ENCODE measurements at regions of chr1 and their contacts with region 1.

Region 1: DNA sequence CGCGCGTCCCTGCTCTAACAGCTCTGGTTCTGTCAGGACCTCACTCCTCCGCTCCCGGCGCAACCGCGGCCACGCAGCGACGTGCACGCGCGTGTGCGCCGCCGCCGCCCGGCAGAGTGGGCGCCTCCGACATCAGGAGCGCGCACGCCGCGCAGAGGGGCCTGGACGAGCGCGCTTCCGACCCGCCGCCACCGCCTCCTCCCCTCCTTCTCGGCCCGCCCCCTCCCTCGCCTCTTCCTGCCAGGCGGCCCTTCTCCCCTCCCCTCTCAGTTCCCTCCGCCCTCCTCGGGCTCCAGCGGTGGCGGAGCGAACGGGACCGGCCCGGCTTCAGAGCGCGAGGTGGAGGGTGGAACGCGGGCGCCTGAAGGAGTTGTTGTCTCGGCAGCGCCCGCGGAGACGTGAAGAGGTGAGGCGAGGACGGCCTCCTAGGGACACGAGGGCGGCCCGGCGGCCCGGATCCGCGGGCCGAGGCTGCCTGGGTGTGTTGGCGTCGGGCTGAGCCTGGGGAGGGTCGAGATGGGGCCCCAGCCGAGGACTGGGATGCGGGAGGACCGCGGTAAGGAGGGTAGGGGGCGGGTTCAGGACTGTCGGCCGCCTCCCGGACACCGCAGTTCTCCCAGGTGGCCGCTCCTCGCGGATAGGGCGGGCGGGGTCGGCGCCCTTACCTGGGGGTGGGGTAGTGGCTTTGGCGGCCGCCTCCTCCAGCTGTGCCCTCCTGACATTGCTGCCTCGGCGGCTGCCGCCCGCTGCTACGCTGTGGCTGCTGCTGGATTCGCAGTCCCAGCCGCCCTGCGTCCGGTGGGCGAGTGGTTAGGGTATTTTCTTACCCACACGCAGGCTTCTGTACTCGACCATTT is at the start of gene RABGAP1L:
- DNase-seq: peak; percentile 96
- ATAC-seq: peak; percentile 86
- H3K4me3 ChIP-seq: peak within 1 kb of the TSS; percentile 76 to 98 (median 93)
- H3K4me3 Mint-ChIP-seq: peak within 1 kb of the TSS; percentile 95
- H3K27ac ChIP-seq: peak within 1 kb of the TSS; percentile 85 to 89
- H3K27ac Mint-ChIP-seq: peak within 1 kb of the TSS; percentile 97
- H3K4me1 ChIP-seq: peaks cover 29 to 48% of the 10 kb centered on the region in 2 donors
- H3K4me1 Mint-ChIP-seq: peaks cover 60% of the 10 kb centered on the region
- H3K27me3 ChIP-seq: no peaks in the 10 kb centered on the region
- H3K27me3 Mint-ChIP-seq: no peaks in the 10 kb centered on the region
- CTCF ChIP-seq: no peak
- total RNA-seq, gene RABGAP1L: 159 and 163 TPM in 2 replicates

Region 2: DNA sequence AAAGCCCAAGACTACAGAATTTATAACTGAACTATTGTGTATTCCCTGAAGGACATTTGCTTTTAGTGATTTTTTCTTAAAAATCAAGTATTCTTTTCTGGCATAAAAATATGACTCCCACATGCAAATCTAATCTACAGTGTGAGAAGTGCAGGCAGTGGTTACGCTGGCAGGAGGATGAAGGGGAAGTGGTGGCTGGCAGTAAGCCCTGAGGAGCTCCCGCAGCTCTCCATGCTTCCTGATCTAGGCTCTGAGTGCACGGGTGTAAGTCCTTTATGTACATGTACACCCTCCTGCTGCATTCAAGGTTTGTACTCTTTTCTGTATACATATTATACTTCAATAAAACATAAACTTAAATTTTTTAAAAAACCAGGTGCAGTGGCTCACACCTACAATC is 749.9 kb before region 1 on chr1:
- CTCF ChIA-PET with region 1: no interaction called
- POLR2A ChIA-PET with region 1: no interaction called
- intact Hi-C with region 1: loop called (anchors 5 kb)
- DNase-seq: peak; percentile 73
- ATAC-seq: peak; percentile 22
- H3K4me3 ChIP-seq: no peak overlapping the region
- H3K4me3 Mint-ChIP-seq: peak overlapping the region; percentile 64
- H3K27ac ChIP-seq: peak overlapping the region; percentile 89 to 97
- H3K27ac Mint-ChIP-seq: peak overlapping the region; percentile 87
- H3K4me1 ChIP-seq: peaks cover 76 to 88% of the 10 kb centered on the region in 2 donors
- H3K4me1 Mint-ChIP-seq: peaks cover 79% of the 10 kb centered on the region
- H3K27me3 ChIP-seq: no peaks in the 10 kb centered on the region
- H3K27me3 Mint-ChIP-seq: no peaks in the 10 kb centered on the region
- CTCF ChIP-seq: no peak

Region 3: DNA sequence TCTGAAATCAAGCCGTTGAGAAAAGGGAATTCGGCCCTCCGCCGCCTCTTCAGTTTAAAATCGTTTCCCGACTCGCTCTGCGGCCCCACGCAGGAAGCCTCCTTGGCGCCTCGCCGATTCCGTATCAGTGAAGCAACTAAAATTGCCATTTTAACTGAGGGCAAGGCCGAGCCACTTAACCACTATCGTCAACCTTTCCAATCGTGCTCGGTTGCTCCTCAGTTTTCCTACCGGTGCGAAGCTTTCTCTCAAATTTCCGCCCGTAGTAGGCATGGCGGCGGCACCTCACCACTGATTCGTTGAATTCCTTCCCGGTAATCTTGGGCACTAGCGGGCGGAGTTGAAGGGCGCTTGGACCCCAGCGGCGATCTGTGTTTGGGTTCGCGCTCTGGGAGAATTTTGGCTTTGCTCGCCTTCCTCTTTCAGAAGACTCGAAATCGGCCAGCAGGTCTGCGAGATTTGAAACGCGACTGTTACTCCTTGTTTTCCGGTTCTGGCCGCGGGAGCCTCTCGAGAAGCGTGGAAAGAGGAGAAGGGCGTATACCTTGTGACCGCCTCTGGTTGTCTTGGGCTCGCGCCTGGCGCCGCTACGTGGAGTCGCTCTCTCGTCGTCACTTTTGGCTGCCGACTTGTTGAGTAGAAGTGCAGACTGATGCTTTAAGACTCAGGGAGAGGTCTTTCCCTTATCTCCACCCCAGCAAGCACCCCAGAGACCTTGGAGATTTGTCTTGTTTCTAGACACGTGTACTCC is 335.0 kb before region 1 on chr1 and contains the starts of genes CENPL and DARS2:
- CTCF ChIA-PET with region 1: no interaction called
- POLR2A ChIA-PET with region 1: no interaction called
- intact Hi-C with region 1: loop called (anchors 1 kb)
- DNase-seq: peak; percentile 94
- ATAC-seq: peak; percentile 89
- H3K4me3 ChIP-seq: peak within 1 kb of the TSS; percentile 78 to 100 (median 93)
- H3K4me3 Mint-ChIP-seq: peak within 1 kb of the TSS; percentile 92
- H3K27ac ChIP-seq: peak within 1 kb of the TSS; percentile 77 to 87
- H3K27ac Mint-ChIP-seq: peak within 1 kb of the TSS; percentile 95
- H3K4me1 ChIP-seq: peaks cover 8 to 18% of the 10 kb centered on the region in 2 donors
- H3K4me1 Mint-ChIP-seq: peaks cover 21% of the 10 kb centered on the region
- H3K27me3 ChIP-seq: no peaks in the 10 kb centered on the region
- H3K27me3 Mint-ChIP-seq: no peaks in the 10 kb centered on the region
- CTCF ChIP-seq: no peak
- total RNA-seq, gene CENPL: 9.7 and 14.4 TPM in 2 replicates
- total RNA-seq, gene DARS2: 17.0 and 17.3 TPM in 2 replicates

Region 4: DNA sequence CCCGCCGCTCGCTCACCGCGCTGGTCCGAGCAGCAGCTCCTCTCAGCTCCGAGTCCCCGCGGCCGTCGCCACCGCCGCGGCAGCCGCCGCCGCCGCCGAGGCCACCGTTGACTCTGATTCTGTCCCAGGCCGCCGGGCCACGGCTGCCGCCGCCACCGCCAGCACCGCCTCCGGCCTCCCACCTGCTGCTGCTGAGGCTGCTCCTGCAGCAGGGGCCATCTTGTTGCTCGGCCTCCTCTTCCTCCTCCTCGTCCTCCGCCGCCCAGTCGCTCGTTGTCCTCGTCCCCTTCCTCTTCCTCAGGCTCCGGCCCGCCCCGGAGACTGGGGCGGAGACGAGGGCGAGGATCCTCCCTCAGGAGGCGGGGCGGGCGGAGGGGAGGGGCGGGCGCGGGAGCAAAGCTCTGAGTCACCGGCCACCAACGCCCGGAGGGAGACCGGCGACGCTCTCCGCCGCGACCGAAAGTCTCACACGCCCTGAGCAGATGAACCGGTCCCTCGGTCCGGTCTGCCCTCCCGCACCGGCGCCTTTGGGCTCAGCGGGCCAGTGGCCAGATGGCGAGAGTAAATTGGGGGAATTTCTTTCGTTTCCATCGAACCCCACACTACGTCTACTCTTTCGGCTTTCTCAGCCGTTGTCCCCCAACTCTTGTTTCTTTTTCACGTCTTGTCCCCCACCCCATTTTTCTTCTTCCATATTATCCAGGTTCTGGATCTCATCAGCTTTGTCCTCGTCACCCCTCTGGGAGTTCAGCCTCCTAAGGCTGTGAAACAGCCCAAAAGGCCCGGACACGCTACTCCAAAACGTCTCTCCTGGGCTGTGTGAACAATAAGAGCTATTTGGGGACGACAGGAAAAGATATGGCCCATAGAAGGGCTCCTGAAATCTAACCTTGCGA is 137.2 kb before region 1 on chr1 and contains the start of gene RC3H1:
- CTCF ChIA-PET with region 1: no interaction called
- POLR2A ChIA-PET with region 1: no interaction called
- intact Hi-C with region 1: loop called (anchors 1 kb)
- DNase-seq: peak; percentile 93
- ATAC-seq: peak; percentile 95
- H3K4me3 ChIP-seq: peak within 1 kb of the TSS; percentile 73 to 94 (median 91)
- H3K4me3 Mint-ChIP-seq: peak within 1 kb of the TSS; percentile 95
- H3K27ac ChIP-seq: peak within 1 kb of the TSS; percentile 76 to 93
- H3K27ac Mint-ChIP-seq: peak within 1 kb of the TSS; percentile 96
- H3K4me1 ChIP-seq: peaks cover 30 to 36% of the 10 kb centered on the region in 2 donors
- H3K4me1 Mint-ChIP-seq: peaks cover 41% of the 10 kb centered on the region
- H3K27me3 ChIP-seq: no peaks in the 10 kb centered on the region
- H3K27me3 Mint-ChIP-seq: no peaks in the 10 kb centered on the region
- CTCF ChIP-seq: no peak
- total RNA-seq, gene RC3H1: 84.4 and 84.5 TPM in 2 replicates

Region 5: GRCh38 chr1:174134003-174134659 is 25.3 kb before region 1 on chr1:
- CTCF ChIA-PET with region 1: no interaction called
- POLR2A ChIA-PET with region 1: no interaction called
- intact Hi-C with region 1: loop called (anchors 2 kb)
- DNase-seq: peak; percentile 70
- ATAC-seq: peak; percentile 91
- H3K4me3 ChIP-seq: no peak overlapping the region
- H3K4me3 Mint-ChIP-seq: peak overlapping the region; percentile 55
- H3K27ac ChIP-seq: peak overlapping the region in 1 of 2 donors; percentile 12
- H3K27ac Mint-ChIP-seq: peak overlapping the region; percentile 86
- H3K4me1 ChIP-seq: peaks cover 10 to 19% of the 10 kb centered on the region in 2 donors
- H3K4me1 Mint-ChIP-seq: peaks cover 32% of the 10 kb centered on the region
- H3K27me3 ChIP-seq: no peaks in the 10 kb centered on the region
- H3K27me3 Mint-ChIP-seq: no peaks in the 10 kb centered on the region
- CTCF ChIP-seq: no peak

Region 6: DNA sequence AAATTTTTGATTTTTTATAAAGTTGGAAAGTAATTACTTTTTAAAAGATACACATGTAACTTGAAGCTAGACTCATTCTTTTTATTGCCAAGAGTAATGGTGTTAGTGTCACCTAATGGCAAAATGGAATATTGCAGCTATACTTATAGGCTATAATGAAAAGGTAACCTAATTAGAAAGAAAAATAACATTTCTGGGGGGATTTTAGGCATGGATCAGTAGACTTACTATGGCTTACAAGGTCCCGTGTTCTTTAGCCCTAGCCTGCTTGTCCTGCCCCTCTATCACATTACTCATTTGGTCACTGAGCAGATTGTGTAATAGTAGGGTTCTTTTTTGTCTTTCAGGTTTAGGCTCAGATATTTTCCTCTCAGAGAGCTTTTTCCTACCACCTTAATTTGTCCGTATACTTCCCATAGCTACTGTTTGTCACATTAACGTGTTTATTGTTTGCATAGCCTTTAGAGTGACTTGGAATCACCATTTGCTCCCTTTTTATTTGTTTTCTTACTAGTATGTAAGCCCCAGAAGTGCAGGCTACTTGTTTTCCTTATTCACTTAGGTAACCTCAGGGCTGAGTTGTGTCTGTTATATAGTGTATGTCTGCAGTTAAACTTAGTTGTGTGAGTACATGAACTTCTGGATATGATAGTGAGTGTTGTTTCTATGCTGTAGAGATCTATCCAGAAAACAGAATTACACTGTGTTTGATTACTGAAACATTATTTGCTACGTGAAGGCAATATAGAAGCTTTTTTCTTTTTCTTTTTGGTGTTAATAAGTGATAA is 58.5 kb after region 1 on chr1:
- CTCF ChIA-PET with region 1: interaction called, 19 read pairs
- POLR2A ChIA-PET with region 1: no interaction called
- intact Hi-C with region 1: loop called (anchors 2 kb)
- DNase-seq: peak; percentile 71
- ATAC-seq: peak; percentile 71
- H3K4me3 ChIP-seq: no peak overlapping the region
- H3K4me3 Mint-ChIP-seq: no peak overlapping the region
- H3K27ac ChIP-seq: peak overlapping the region; percentile 48 to 67
- H3K27ac Mint-ChIP-seq: no peak overlapping the region
- H3K4me1 ChIP-seq: peaks cover 37 to 39% of the 10 kb centered on the region in 2 donors
- H3K4me1 Mint-ChIP-seq: peaks cover 40% of the 10 kb centered on the region
- H3K27me3 ChIP-seq: no peaks in the 10 kb centered on the region
- H3K27me3 Mint-ChIP-seq: no peaks in the 10 kb centered on the region
- CTCF ChIP-seq: peak; percentile 93